GM10248 (cell line): ENCODE measurements at regions of chr20 and their contacts with region 1.

Region 1: GRCh38 chr20:44196271-44196670 is 9.3 kb upstream of the JPH2 start:
- DNase-seq: no peak
- CTCF ChIP-seq: no peak

Region 2: GRCh38 chr20:44209686-44210421 is 13.6 kb after region 1 on chr20:
- CTCF ChIA-PET with region 1: interaction called, 14 read pairs
- POLR2A ChIA-PET with region 1: no interaction called
- DNase-seq: no peak
- CTCF ChIP-seq: no peak

Region 3: GRCh38 chr20:44319756-44320422 is 123.6 kb after region 1 on chr20:
- CTCF ChIA-PET with region 1: no interaction called
- POLR2A ChIA-PET with region 1: no interaction called
- DNase-seq: no peak
- CTCF ChIP-seq: no peak